Left lung (tissue), 14 donors: ENCODE measurements at regions of chr3 and their contacts with region 1.

Region 1: GRCh38 chr3:98809557-98809956 is 46.4 kb downstream of the ST3GAL6 start:
- DNase-seq: peak in 1 of 4 donors; percentile 13
- ATAC-seq: peak; percentile 29
- H3K4me3 ChIP-seq: no peak overlapping the region
- H3K27ac ChIP-seq: no peak overlapping the region
- H3K4me1 ChIP-seq: peaks cover 0 to 7% of the 10 kb centered on the region in 2 donors
- H3K27me3 ChIP-seq: no peaks in the 10 kb centered on the region
- CTCF ChIP-seq: no peak

Region 2: DNA sequence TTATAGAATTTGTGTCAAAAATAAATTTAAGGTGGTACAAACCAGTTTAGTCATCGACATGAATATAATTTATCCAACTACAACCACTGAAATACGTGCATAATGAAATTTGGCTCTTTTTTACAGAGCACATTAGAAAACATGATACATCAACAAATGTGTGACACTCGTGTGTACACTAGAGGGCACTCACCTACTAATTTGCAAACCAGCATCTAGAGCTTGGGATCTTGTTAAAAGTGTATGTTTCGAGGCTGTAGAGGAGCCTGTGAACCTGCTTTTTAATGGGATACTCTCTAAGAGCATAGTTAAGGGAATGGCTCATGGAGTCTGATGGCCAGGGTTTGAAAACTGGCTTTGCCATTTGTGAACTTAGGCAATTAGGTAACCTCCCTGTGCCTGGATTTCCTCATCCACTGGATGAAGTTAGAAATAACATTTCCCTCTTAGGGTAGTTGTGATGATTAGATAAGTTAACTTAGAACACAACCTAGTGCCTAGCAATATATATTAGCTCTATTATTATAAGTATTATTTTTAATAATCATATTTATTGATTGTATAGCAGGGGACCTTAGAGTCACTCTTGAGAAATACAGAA is 207.4 kb before region 1 on chr3:
- intact Hi-C with region 1: loop called in 1 of 2 experiments (anchors 5 kb)
- DNase-seq: peak in 2 of 4 donors; percentile 51 to 68
- ATAC-seq: peak; percentile 87
- H3K4me3 ChIP-seq: no peak overlapping the region
- H3K27ac ChIP-seq: no peak overlapping the region
- H3K4me1 ChIP-seq: peaks cover 0 to 19% of the 10 kb centered on the region in 2 donors
- H3K27me3 ChIP-seq: no peaks in the 10 kb centered on the region
- CTCF ChIP-seq: peak; percentile 31 to 67